Activated CD4-positive, alpha-beta memory T cell treated with anti-CD3 and anti-CD28 coated beads for 36 hours (primary cell): ENCODE measurements at regions of chr10 and their contacts with region 1.

Region 1: GRCh38 chr10:91797874-91798648 is at the start of gene TNKS2:
- DNase-seq: peak; percentile 95
- H3K4me3 Mint-ChIP-seq: peak within 1 kb of the TSS; percentile 86
- H3K27ac Mint-ChIP-seq: peak within 1 kb of the TSS; percentile 91
- H3K4me1 Mint-ChIP-seq: peaks cover 53% of the 10 kb centered on the region
- H3K27me3 Mint-ChIP-seq: peaks cover 1% of the 10 kb centered on the region
- total RNA-seq, gene TNKS2: 34.5 to 35.7 TPM

Region 2: GRCh38 chr10:91006001-91006751 is 791.9 kb before region 1 on chr10:
- CTCF ChIA-PET with region 1: interaction called, 3 read pairs
- POLR2A ChIA-PET with region 1: no interaction called
- intact Hi-C with region 1: loop called (anchors 5 kb)
- DNase-seq: peak; percentile 73
- H3K4me3 Mint-ChIP-seq: no peak overlapping the region
- H3K27ac Mint-ChIP-seq: no peak overlapping the region
- H3K4me1 Mint-ChIP-seq: peaks cover 30% of the 10 kb centered on the region
- H3K27me3 Mint-ChIP-seq: no peaks in the 10 kb centered on the region

Region 3: DNA sequence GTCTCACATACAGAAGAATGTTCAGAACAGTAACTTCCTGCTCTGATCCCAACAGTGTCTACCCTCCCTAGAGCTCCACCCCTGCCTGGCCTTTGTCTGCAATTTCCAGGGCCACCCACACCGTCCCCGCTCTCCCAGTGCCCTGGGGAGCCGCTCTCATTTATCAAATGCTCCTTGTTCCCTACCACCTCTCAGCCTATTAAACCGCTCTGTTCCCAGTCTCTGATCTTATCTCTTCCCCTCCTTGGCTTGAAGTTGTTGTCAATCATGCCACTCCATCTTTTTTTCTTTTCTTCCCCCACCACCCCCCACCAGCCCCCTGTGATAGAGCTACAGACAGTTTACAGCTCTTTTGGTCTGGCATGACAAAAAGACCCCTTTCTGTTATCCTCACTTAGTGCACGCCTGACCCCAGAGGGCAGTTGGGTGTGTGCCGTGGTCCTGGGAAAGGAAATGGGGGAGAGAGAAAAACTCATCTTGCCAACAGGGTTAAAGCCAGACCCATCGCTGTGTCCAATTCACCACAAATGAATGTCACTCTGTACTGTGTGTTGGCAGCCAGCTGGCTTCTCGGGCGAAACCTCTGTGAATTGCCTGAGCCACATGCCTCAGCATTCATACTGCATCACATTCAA is 416.7 kb before region 1 on chr10:
- CTCF ChIA-PET with region 1: no interaction called
- POLR2A ChIA-PET with region 1: no interaction called
- intact Hi-C with region 1: no loop called
- DNase-seq: no peak
- H3K4me3 Mint-ChIP-seq: no peak overlapping the region
- H3K27ac Mint-ChIP-seq: no peak overlapping the region
- H3K4me1 Mint-ChIP-seq: peaks cover 14% of the 10 kb centered on the region
- H3K27me3 Mint-ChIP-seq: peaks cover 32% of the 10 kb centered on the region

Region 4: DNA sequence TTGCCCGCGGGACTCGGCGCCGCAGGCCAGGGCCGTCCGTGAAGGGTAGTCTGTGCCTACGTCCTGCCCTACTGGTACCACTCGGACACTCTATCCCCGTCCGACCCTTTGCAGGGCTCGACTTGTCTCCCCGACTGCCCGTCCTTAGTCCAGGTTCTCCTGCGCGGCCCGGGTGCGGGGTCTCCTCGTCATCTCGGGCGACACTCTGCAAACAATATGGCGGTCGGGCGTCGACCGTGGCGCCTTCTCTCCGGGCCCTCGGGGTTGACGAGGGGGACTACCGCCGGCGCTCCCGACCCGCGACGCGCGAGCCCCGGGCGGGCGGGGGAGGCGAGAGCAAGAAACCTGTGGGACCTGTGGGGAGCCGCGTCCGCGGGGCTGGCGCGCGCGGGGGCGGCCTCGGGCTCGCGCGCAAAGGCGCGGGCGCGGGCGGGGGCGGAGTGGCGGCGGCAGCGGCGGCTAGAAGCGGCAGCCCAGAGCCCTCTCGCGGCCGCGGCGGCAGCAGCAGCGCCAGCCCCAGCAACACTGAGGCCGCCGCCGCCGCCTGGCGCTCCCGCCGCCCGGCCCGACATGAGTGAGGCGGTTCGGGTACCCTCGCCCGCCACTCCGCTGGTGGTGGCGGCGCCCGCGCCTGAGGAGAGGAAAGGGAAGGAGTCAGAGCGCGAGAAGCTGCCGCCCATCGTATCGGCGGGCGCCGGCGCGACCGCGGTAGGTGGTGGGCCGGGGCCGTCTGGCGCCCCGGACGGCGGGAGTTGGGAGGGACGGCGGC is 388.0 kb before region 1 on chr10 and contains the start of gene HECTD2:
- CTCF ChIA-PET with region 1: no interaction called
- POLR2A ChIA-PET with region 1: no interaction called
- intact Hi-C with region 1: loop called (anchors 2 kb)
- DNase-seq: peak; percentile 82
- H3K4me3 Mint-ChIP-seq: peak within 1 kb of the TSS; percentile 79
- H3K27ac Mint-ChIP-seq: peak within 1 kb of the TSS; percentile 83
- H3K4me1 Mint-ChIP-seq: peaks cover 13% of the 10 kb centered on the region
- H3K27me3 Mint-ChIP-seq: no peaks in the 10 kb centered on the region
- total RNA-seq, gene HECTD2: 4.0 to 5.5 TPM

Region 5: DNA sequence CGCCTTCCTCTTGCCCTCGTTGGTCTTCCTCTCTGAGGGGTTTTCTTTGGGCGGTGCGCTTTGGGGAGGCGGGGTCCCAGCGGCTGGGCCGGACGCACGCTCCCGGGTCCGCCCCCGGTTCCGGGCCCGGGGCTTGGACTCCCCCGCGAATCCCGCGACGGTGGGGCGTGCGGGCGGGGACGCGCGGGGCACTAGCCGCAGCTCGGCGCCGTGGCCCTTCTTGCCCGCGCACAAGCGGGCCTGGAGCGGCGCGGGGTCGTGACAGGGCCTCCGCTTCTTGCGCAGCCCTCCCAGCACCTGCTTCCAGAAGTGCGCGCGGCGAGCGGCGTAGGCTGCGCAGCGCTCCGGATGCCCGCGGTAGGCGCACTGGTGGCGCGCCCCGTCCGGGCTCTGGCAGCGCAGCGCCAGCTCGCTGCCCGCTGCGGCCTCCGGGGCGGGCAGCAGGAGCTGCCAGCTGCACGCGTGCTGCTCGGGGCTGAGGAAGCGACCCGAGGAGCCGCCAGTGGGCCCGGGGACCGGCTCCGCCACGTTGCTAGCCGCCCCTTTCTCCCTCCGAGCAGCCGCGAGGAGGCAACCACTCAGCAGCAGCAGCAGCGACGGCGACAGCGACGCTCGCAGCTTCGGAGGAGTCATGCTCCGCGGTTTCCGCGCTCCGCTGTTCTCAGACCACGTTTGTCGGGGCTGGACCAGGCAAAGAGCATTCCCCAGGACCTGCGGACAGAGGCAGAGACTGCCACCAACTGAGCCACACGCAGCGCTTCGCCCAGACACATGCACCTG is 110.5 kb after region 1 on chr10:
- CTCF ChIA-PET with region 1: interaction called, 9 read pairs
- POLR2A ChIA-PET with region 1: interaction called, 4 read pairs
- intact Hi-C with region 1: loop called (anchors 1 kb)
- DNase-seq: peak; percentile 82
- H3K4me3 Mint-ChIP-seq: peak overlapping the region; percentile 91
- H3K27ac Mint-ChIP-seq: peak overlapping the region; percentile 75
- H3K4me1 Mint-ChIP-seq: peaks cover 16% of the 10 kb centered on the region
- H3K27me3 Mint-ChIP-seq: peaks cover 5% of the 10 kb centered on the region

Region 6: GRCh38 chr10:91957091-91957490 is 159.0 kb after region 1 on chr10:
- CTCF ChIA-PET with region 1: no interaction called
- POLR2A ChIA-PET with region 1: no interaction called
- intact Hi-C with region 1: loop called (anchors 2 kb)
- DNase-seq: no peak
- H3K4me3 Mint-ChIP-seq: no peak overlapping the region
- H3K27ac Mint-ChIP-seq: no peak overlapping the region
- H3K4me1 Mint-ChIP-seq: peaks cover 2% of the 10 kb centered on the region
- H3K27me3 Mint-ChIP-seq: no peaks in the 10 kb centered on the region

Region 7: DNA sequence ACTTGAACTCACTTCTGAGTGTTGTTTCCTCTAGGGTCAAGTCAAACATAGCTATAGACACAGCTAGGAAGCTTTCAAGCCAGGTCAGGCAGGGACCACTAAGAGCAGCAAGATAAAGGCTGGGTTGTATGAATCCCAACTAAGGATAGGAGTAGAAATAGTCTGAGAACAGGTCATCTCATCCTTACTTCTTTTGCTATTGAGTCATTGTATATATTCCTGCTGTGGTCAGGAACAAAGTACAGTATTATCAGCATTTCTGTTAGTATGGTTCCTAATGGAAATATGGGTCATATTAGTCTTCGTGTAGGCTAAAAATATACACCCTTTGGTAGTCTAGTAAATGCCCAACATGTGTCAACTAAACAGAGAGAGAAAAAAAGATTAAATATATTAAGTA is 270.8 kb after region 1 on chr10:
- CTCF ChIA-PET with region 1: no interaction called
- POLR2A ChIA-PET with region 1: no interaction called
- intact Hi-C with region 1: no loop called
- DNase-seq: no peak
- H3K4me3 Mint-ChIP-seq: no peak overlapping the region
- H3K27ac Mint-ChIP-seq: no peak overlapping the region
- H3K4me1 Mint-ChIP-seq: peaks cover 2% of the 10 kb centered on the region
- H3K27me3 Mint-ChIP-seq: no peaks in the 10 kb centered on the region

Region 8: GRCh38 chr10:92592761-92593618 is 794.9 kb after region 1 on chr10 and contains the start of gene KIF11:
- CTCF ChIA-PET with region 1: no interaction called
- POLR2A ChIA-PET with region 1: no interaction called
- intact Hi-C with region 1: loop called (anchors 1 kb)
- DNase-seq: peak; percentile 98
- H3K4me3 Mint-ChIP-seq: peak within 1 kb of the TSS; percentile 97
- H3K27ac Mint-ChIP-seq: peak within 1 kb of the TSS; percentile 100
- H3K4me1 Mint-ChIP-seq: peaks cover 40% of the 10 kb centered on the region
- H3K27me3 Mint-ChIP-seq: no peaks in the 10 kb centered on the region
- total RNA-seq, gene KIF11: 56.3 to 57.3 TPM